Vagina (tissue), 2 donors: ENCODE measurements at regions of chr17 and their contacts with region 1.

Region 1: GRCh38 chr17:36545465-36546417 is 1.0 kb downstream of the GGNBP2 start:
- DNase-seq: peak in 1 of 2 donors; percentile 98
- H3K4me3 ChIP-seq: peak overlapping the region; percentile 94 to 98
- H3K27ac ChIP-seq: peak overlapping the region; percentile 100
- H3K4me1 ChIP-seq: peaks cover 54% of the 10 kb centered on the region
- H3K27me3 ChIP-seq: no peaks in the 10 kb centered on the region
- CTCF ChIP-seq: peak in 1 of 3 experiments; percentile 5
- POLR2A ChIP-seq: peak in 1 of 2 donors; percentile 56

Region 2: GRCh38 chr17:36591434-36592315 is 45.9 kb after region 1 on chr17 and contains the start of gene DHRS11:
- intact Hi-C with region 1: loop called (anchors 10 kb)
- DNase-seq: no peak
- H3K4me3 ChIP-seq: peak within 1 kb of the TSS; percentile 68 to 97
- H3K27ac ChIP-seq: peak within 1 kb of the TSS; percentile 53
- H3K4me1 ChIP-seq: peaks cover 11% of the 10 kb centered on the region
- H3K27me3 ChIP-seq: no peaks in the 10 kb centered on the region
- CTCF ChIP-seq: no peak
- POLR2A ChIP-seq: peak in 1 of 2 donors; percentile 2
- total RNA-seq, gene DHRS11: 12.0 TPM